Dendritic cell treated with granulocyte-macrophage colony-stimulating factor and Interleukin-4, amounts not matched to agents 40 ng/mL and 50 ng/mL, for 4 days (primary cell): ENCODE measurements at regions of chr20 and their contacts with region 1.

Region 1: DNA sequence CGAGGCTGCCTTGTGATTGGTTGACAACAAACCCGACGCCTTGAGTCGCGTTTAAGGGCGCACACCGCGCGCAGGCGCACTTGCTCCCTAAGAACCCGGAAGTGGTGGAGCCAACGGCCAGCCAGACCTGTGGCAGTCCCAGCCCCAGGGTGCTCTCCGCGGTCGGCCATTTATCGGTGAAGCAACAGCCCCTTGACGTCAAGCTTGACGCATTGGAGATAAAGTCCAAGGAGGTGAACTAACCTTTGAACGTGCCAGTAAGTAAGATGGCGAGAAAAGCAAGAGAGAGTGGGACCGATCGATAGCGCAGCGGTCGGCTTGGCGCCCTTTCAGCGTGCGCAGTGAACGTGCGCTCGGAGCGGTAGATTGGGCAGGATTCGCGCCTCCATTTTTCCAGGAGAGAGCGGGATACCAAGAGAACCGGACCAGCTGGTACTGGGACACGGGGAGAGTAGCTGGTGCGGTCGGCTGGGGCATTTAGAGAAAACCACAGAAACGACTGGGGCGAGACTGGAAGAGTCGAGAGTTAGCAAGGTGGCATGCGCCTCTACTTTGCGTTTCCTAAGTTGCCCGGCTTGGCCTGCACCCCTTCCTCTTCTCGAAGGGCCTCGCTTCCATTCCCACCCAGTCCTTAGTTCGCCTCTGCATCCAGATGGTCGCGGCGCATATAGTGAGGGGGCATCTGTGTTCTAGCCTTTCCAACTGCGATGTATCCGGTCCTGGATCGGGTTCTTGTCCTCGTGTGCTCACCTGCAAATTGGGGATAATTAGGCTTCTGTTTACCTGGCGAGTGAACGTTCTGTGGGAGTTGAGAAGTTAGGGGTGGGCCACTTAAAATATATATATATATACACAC is at the start of gene CSTF1:
- H3K4me3 Mint-ChIP-seq: peak within 1 kb of the TSS; percentile 48
- H3K27ac Mint-ChIP-seq: no peak within 1 kb of the TSS
- H3K4me1 Mint-ChIP-seq: peaks cover 18% of the 10 kb centered on the region
- H3K27me3 Mint-ChIP-seq: no peaks in the 10 kb centered on the region

Region 2: DNA sequence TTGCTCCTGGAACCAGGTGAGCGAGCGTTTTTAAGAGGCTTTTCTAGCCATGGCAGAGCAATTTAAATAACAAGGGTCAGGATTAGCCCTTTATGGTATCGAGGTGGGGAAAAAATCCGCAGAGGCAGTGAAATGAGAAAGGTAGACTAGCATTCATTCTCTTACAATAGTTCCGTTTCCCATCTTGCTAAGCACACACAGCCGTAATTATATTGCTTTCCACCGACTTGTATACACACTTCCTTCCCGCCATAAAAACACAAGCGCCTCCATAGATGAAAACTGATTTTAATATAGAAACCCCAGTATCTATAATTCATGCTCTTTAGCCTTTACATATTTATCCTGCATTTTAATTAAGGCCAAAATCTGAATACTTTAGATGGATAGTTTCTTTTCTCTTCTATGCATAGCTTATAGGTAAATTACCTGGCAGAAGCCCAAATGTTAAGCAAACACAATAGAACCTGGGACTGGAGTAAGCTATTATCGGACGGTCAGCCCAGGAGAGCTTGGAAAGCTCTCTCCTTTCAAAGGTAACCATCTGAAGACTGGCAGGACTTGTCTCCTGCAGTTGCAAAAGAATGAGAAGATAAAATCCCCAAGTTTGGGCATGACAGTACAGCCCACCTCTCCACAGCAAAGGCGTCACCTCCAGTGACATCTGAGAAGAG is 234.8 kb before region 1 on chr20:
- intact Hi-C with region 1: no loop called
- H3K4me3 Mint-ChIP-seq: no peak overlapping the region
- H3K27ac Mint-ChIP-seq: no peak overlapping the region
- H3K4me1 Mint-ChIP-seq: no peaks in the 10 kb centered on the region
- H3K27me3 Mint-ChIP-seq: no peaks in the 10 kb centered on the region

Region 3: DNA sequence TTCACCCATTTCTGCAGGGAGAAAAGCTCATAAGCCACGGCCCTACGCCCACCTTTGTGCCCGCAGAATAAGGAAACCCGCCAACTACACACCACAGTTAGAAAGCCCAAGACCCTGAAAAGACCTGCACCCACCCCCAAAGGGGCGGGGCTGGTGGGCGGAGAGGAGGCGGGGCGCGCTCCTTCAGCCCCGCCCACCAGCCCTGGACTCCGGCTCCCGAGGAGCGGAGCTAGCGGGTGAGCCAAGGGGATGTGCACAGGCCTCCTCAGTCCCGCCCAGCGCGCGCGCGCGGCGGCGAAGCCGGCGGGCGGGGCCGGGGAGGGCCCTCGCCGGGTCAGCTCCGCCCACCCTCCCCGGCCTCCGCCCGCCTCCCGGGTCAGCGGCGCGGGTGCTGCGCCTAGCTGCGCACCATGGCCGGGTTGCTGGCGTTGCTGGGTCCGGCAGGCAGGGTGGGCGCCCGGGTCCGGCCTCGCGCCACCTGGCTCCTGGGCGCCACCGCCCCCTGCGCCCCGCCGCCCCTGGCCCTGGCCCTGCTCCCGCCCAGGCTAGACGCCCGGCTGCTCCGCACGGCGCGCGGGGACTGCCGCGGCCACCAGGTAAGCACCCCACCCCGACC is 33.8 kb before region 1 on chr20 and contains the start of gene FAM210B:
- intact Hi-C with region 1: loop called (anchors 1 kb)
- H3K4me3 Mint-ChIP-seq: peak within 1 kb of the TSS; percentile 91
- H3K27ac Mint-ChIP-seq: peak within 1 kb of the TSS; percentile 83
- H3K4me1 Mint-ChIP-seq: peaks cover 24% of the 10 kb centered on the region
- H3K27me3 Mint-ChIP-seq: peaks cover 3% of the 10 kb centered on the region

Region 4: GRCh38 chr20:56380375-56380774 is 12.1 kb before region 1 on chr20:
- intact Hi-C with region 1: loop called (anchors 1 kb)
- H3K4me3 Mint-ChIP-seq: no peak overlapping the region
- H3K27ac Mint-ChIP-seq: peak overlapping the region; percentile 69
- H3K4me1 Mint-ChIP-seq: peaks cover 33% of the 10 kb centered on the region
- H3K27me3 Mint-ChIP-seq: no peaks in the 10 kb centered on the region

Region 5: GRCh38 chr20:56411759-56412472 is 19.4 kb after region 1 on chr20 and contains the start of gene CASS4:
- intact Hi-C with region 1: loop called (anchors 1 kb)
- H3K4me3 Mint-ChIP-seq: peak within 1 kb of the TSS; percentile 94
- H3K27ac Mint-ChIP-seq: peak within 1 kb of the TSS; percentile 89
- H3K4me1 Mint-ChIP-seq: peaks cover 62% of the 10 kb centered on the region
- H3K27me3 Mint-ChIP-seq: no peaks in the 10 kb centered on the region

Region 6: GRCh38 chr20:56468316-56469082 is 76.0 kb after region 1 on chr20 and contains the start of gene RTF2:
- intact Hi-C with region 1: loop called (anchors 1 kb)
- H3K4me3 Mint-ChIP-seq: peak within 1 kb of the TSS; percentile 100
- H3K27ac Mint-ChIP-seq: peak within 1 kb of the TSS; percentile 99
- H3K4me1 Mint-ChIP-seq: peaks cover 68% of the 10 kb centered on the region
- H3K27me3 Mint-ChIP-seq: no peaks in the 10 kb centered on the region

Region 7: GRCh38 chr20:56574531-56575142 is 182.1 kb after region 1 on chr20:
- intact Hi-C with region 1: loop called (anchors 10 kb)
- H3K4me3 Mint-ChIP-seq: no peak overlapping the region
- H3K27ac Mint-ChIP-seq: no peak overlapping the region
- H3K4me1 Mint-ChIP-seq: peaks cover 4% of the 10 kb centered on the region
- H3K27me3 Mint-ChIP-seq: peaks cover 18% of the 10 kb centered on the region